KBM-7 (cell line): ENCODE measurements at regions of chr1 and their contacts with region 1.

Region 1: DNA sequence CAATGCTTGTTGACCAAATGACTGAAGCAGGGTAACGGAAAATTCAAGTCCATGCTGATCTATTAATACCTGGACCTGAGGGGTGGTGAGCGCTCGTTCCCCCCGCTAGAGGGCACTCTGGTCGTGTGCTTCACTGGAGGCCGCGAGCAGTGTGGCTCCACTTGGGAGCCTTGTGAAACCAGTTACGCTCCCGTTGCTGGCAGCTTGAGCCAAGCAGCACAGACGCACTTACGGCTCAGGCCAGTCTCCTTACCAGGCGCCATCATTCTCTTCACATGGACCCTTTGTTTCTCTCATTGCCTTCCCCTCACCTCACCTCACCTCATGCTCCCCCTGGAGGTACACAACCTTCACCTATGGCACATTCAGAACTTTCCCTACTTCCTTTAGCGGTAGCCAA is 49.7 kb upstream of the TSPAN2 start:
- DNase-seq: peak; percentile 75

Region 2: GRCh38 chr1:114610546-114611245 is 528.3 kb before region 1 on chr1:
- in situ Hi-C with region 1: no loop called
- DNase-seq: no peak

Region 3: GRCh38 chr1:115595279-115596079 is 456.5 kb after region 1 on chr1:
- in situ Hi-C with region 1: loop called (anchors 10 kb)
- DNase-seq: peak; percentile 81

Region 4: DNA sequence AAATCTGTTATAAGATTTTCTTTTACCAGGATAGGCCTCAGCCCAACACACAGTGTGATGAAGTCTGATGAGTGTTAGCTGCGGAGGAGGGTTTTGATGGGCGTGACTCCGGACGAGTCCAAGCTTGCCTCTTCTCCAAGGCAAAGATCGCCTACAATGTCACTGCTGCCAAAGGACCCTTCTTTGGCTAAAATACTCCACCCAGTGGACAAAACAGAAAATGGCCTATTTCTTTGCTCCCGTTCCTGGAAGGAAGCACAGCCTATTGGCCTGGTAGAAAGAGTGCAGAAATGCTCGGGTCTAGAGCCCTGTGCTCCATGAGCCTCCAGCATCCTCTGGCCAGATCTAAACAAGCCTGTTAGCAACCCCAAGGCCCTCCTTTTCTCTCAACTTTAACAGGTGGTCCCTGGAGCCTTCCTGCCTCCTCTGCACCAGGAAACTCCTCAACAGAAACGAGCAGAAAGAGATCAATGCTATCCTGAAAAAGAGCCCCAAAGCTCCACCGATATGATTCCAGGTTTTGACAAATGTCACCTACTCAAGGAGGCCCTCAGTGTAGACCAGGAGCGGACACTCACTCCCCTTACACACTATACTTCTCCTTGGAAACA is 633.0 kb after region 1 on chr1:
- in situ Hi-C with region 1: loop called (anchors 25 kb)
- DNase-seq: peak; percentile 90